Head of caudate nucleus (tissue), 42 donors: ENCODE measurements at regions of chr4 and their contacts with region 1.

Region 1: GRCh38 chr4:1856042-1856788 is at the start of gene LETM1:
- DNase-seq: peak; percentile 90 to 99 (median 98)

Region 2: GRCh38 chr4:1870578-1871443 is 14.6 kb after region 1 on chr4 and contains the start of gene NSD2:
- intact Hi-C with region 1: loop called (anchors 1 kb)
- DNase-seq: peak; percentile 50 to 94 (median 89)